Natural killer cell (primary cell): ENCODE measurements at regions of chr4 and their contacts with region 1.

Region 1: GRCh38 chr4:103091601-103092223 is 7.9 kb downstream of the BDH2 start:
- DNase-seq: peak; percentile 21 to 82
- ATAC-seq: peak; percentile 61 to 88 (median 71)
- H3K4me3 ChIP-seq: no peak overlapping the region
- H3K4me3 Mint-ChIP-seq: no peak overlapping the region
- H3K27ac ChIP-seq: no peak overlapping the region
- H3K27ac Mint-ChIP-seq: peak overlapping the region in 1 of 2 donors; percentile 61
- H3K4me1 ChIP-seq: no peaks in the 10 kb centered on the region
- H3K4me1 Mint-ChIP-seq: peaks cover 10 to 13% of the 10 kb centered on the region in 2 donors
- H3K27me3 ChIP-seq: no peaks in the 10 kb centered on the region
- H3K27me3 Mint-ChIP-seq: no peaks in the 10 kb centered on the region
- CTCF ChIP-seq: peak; percentile 68

Region 2: GRCh38 chr4:103046416-103047290 is 45.1 kb before region 1 on chr4:
- intact Hi-C with region 1: loop called (anchors 1 kb)
- DNase-seq: peak in 1 of 2 donors; percentile 71
- ATAC-seq: peak; percentile 93 to 100 (median 99)
- H3K4me3 ChIP-seq: no peak overlapping the region
- H3K4me3 Mint-ChIP-seq: no peak overlapping the region
- H3K27ac ChIP-seq: no peak overlapping the region
- H3K27ac Mint-ChIP-seq: no peak overlapping the region
- H3K4me1 ChIP-seq: no peaks in the 10 kb centered on the region
- H3K4me1 Mint-ChIP-seq: no peaks in the 10 kb centered on the region
- H3K27me3 ChIP-seq: no peaks in the 10 kb centered on the region
- H3K27me3 Mint-ChIP-seq: no peaks in the 10 kb centered on the region
- CTCF ChIP-seq: peak; percentile 70